Right cardiac atrium (tissue), 5 donors: ENCODE measurements at regions of chr15 and their contacts with region 1.

Region 1: DNA sequence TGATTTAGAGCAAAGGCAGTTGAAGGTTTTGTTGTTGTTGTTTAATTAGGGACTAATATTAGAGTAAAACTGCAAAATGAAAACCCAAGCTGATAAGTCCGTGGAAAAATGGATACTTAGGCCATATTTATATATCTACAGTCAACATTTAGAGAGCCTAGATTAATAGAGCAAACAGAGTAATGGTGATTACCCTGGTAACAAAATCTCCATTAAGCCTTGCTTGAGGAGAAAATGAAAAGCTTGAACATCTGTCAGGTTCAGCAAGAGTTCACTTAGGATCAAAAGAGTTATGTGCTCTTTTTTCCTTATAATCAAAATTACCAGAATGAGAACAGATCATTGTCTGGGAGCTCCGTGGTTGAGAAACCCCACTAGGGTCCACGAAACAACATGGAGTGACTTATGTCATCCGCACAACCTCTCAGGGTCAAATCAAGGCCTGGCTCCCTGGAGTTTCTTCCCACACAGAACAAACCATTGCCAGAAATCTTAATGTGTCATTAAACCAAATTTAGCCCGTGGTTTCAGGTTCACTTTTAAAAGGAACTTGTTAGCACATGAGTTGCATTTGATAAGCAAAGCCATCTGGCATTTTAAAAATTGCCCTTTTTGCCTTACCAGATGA is 381.2 kb downstream of the GABRB3 start:
- DNase-seq: no peak
- ATAC-seq: no peak
- H3K4me3 ChIP-seq: no peak overlapping the region
- H3K27ac ChIP-seq: no peak overlapping the region
- H3K4me1 ChIP-seq: no peaks in the 10 kb centered on the region
- H3K27me3 ChIP-seq: no peaks in the 10 kb centered on the region

Region 2: GRCh38 chr15:26179906-26180305 is 211.8 kb before region 1 on chr15:
- intact Hi-C with region 1: no loop called
- DNase-seq: peak in 2 of 3 donors; percentile 48 to 60
- ATAC-seq: peak; percentile 77 to 89
- H3K4me3 ChIP-seq: no peak overlapping the region
- H3K27ac ChIP-seq: no peak overlapping the region
- H3K4me1 ChIP-seq: no peaks in the 10 kb centered on the region
- H3K27me3 ChIP-seq: no peaks in the 10 kb centered on the region

Region 3: DNA sequence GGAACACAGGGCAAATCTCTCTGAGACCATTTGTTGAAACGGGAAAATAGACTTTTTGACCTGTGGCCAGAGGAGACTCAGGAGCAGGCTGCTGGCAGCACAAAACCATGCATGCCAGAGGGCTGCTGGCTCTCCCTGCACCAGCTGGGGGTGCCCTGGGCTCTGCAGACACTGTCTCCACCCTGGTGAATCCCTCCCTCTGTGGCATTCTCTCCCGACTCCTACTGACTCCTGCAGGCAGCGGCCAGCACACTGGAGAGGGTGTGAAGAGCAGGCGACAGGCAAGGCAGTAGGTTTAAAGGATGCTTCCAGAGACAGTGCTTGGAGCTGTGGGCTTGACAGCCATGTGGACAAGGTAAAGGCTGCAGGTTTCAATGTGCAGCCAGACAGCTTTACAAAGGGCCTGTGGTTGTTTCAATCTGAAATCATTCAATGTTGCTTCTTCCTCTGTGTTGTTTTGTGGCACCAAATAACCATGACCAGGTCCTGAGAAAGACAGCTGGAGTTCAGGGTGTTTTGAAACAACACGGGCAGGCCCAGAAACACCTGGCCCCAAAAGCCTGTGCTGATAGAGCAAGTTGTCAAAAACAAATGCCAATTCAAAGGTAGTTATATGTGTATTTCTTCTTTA is 97.5 kb before region 1 on chr15:
- intact Hi-C with region 1: loop called in 1 of 4 experiments (anchors 10 kb)
- DNase-seq: peak; percentile 40 to 82 (median 78)
- ATAC-seq: peak; percentile 93 to 94
- H3K4me3 ChIP-seq: no peak overlapping the region
- H3K27ac ChIP-seq: no peak overlapping the region
- H3K4me1 ChIP-seq: no peaks in the 10 kb centered on the region
- H3K27me3 ChIP-seq: no peaks in the 10 kb centered on the region

Region 4: DNA sequence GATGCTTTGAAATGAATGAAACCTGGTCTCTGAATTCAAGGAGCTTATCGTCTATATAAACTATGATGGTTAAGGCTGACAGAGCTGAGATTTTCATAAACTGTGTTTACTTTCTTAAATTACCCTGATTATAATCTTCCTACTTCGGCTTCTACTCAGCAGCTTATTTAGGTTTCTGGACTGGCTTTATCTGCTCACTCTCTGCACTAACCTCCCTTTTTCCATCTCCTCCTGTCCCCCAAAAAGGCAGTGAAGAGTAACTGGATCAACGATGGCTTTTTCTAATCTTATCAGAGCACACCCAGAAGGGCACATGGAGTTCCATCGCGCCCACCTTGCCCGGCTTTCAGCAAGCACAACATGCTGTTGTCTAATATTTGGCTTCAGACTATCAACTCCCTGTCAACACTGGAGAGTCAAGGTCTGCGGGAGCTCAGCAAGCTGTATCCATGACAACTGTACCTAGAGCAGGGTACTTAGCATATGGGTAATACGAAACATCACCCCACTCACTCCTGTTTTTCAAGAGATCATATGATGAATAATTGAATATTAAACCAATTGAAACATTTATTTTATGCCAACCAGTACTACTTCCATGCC is 36.1 kb before region 1 on chr15:
- intact Hi-C with region 1: no loop called
- DNase-seq: peak in 1 of 3 donors; percentile 63
- ATAC-seq: peak; percentile 58 to 73
- H3K4me3 ChIP-seq: no peak overlapping the region
- H3K27ac ChIP-seq: no peak overlapping the region
- H3K4me1 ChIP-seq: no peaks in the 10 kb centered on the region
- H3K27me3 ChIP-seq: no peaks in the 10 kb centered on the region

Region 5: DNA sequence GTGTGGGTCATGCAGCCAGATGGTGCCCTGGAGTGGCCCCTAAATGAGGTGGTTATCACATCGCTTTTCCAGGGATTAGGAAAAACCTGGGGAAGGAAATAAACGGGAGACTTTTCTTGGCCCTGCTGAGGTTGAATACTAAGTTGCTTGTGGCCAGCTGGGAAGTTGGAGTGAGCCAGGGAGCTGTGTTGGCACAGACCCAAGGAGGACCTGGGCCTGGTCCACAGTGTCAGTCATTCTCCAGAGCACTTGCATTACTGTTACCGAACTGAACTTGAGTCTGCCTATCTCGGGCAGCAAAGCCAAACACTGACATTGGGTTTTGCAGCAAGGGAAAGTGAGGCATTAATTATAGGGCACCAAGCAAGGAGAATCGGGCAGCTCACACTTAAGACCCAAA is 42.1 kb after region 1 on chr15:
- intact Hi-C with region 1: no loop called
- DNase-seq: peak; percentile 20 to 69 (median 56)
- ATAC-seq: peak; percentile 56 to 60
- H3K4me3 ChIP-seq: no peak overlapping the region
- H3K27ac ChIP-seq: peak overlapping the region; percentile 20
- H3K4me1 ChIP-seq: peaks cover 4% of the 10 kb centered on the region
- H3K27me3 ChIP-seq: no peaks in the 10 kb centered on the region

Region 6: DNA sequence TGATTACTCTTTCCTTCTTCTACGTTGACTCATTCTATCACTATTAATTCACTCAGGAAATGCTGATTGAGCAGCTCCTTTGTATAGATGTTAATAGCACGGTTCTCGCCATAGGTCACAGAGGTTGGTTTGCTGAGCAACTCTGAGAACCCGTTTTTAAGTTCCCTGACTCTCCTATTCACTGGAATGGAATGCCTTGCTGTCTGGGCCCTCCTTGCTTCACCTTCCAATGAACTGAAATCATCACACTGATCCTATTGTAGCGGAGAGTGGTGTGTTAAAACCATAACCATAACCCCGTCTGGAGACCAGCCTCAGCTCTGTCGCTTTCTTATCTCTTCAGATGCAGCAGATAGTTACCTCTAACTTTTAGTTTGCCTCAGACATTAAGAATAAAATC is 57.6 kb after region 1 on chr15:
- intact Hi-C with region 1: loop called in 1 of 4 experiments (anchors 10 kb)
- DNase-seq: no peak
- ATAC-seq: no peak
- H3K4me3 ChIP-seq: no peak overlapping the region
- H3K27ac ChIP-seq: no peak overlapping the region
- H3K4me1 ChIP-seq: no peaks in the 10 kb centered on the region
- H3K27me3 ChIP-seq: no peaks in the 10 kb centered on the region

Region 7: GRCh38 chr15:26461847-26462608 is 70.3 kb after region 1 on chr15:
- intact Hi-C with region 1: loop called in 1 of 4 experiments (anchors 10 kb)
- DNase-seq: no peak
- ATAC-seq: peak in 1 of 2 donors; percentile 48
- H3K4me3 ChIP-seq: no peak overlapping the region
- H3K27ac ChIP-seq: no peak overlapping the region
- H3K4me1 ChIP-seq: no peaks in the 10 kb centered on the region
- H3K27me3 ChIP-seq: no peaks in the 10 kb centered on the region